Right cardiac atrium (tissue), 5 donors: ENCODE measurements at regions of chr6 and their contacts with region 1.

Region 1: DNA sequence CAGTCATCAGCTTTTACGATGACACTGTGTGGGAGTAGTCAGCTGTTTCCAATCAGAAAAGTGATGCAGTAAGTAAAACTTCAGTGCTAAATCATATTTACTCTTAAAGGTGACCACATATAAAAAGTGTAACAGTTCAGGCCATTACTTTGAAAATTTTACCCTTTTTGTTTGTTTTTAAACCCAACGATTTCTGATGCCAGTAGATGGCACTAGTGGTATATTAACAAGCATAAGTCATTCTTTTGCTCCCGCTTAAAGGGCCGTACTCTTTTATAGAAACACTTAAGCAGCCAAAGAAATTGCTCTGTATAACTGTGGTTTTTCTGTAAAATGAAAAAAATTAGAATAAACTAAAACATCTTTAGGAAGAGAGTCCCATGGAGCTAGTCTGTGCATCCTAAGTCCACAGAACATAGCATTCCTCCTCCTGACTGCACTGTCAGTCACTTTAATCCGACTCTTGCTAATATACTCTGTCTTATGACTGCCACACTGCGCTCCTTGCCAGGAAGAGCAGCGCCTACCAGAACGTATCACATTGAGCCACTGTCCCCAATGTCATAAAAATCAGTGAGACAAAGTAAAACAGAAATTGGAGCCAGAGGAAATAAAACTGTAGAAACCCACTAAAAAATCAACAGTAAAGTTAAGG is 25.0 kb downstream of the HEBP2 start:
- DNase-seq: peak in 1 of 3 donors; percentile 51
- ATAC-seq: peak; percentile 38 to 42
- H3K4me3 ChIP-seq: no peak overlapping the region
- H3K27ac ChIP-seq: no peak overlapping the region
- H3K4me1 ChIP-seq: no peaks in the 10 kb centered on the region
- H3K27me3 ChIP-seq: no peaks in the 10 kb centered on the region

Region 2: GRCh38 chr6:138509371-138509770 is 80.3 kb after region 1 on chr6:
- intact Hi-C with region 1: loop called (anchors 5 to 10 kb)
- DNase-seq: peak in 2 of 3 donors; percentile 46 to 64
- ATAC-seq: peak in 1 of 2 donors; percentile 68
- H3K4me3 ChIP-seq: no peak overlapping the region
- H3K27ac ChIP-seq: no peak overlapping the region
- H3K4me1 ChIP-seq: no peaks in the 10 kb centered on the region
- H3K27me3 ChIP-seq: no peaks in the 10 kb centered on the region

Region 3: DNA sequence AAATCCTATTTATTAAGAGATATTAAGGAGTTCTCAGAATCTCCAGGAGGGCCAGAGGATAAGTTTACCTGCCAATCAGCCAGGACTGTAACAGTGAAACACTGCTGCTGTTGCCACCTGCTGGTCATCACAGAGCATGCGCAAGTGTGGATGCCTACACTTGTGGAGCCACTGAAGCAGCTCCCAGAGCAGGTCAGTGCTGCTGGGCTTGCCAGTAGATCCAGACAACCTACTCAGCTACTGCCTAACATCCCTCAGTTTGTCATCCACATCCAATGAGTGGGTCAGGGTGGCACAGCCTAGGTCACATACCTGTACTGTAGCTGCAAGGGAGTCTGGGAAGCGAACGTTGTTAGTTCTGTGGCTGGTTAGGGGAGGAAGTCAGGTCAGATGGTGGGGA is 88.6 kb after region 1 on chr6:
- intact Hi-C with region 1: loop called in 2 of 4 experiments (anchors 5 to 10 kb)
- DNase-seq: peak in 2 of 3 donors; percentile 47 to 58
- ATAC-seq: peak; percentile 51 to 60
- H3K4me3 ChIP-seq: no peak overlapping the region
- H3K27ac ChIP-seq: no peak overlapping the region
- H3K4me1 ChIP-seq: peaks cover 4% of the 10 kb centered on the region
- H3K27me3 ChIP-seq: no peaks in the 10 kb centered on the region

Region 4: DNA sequence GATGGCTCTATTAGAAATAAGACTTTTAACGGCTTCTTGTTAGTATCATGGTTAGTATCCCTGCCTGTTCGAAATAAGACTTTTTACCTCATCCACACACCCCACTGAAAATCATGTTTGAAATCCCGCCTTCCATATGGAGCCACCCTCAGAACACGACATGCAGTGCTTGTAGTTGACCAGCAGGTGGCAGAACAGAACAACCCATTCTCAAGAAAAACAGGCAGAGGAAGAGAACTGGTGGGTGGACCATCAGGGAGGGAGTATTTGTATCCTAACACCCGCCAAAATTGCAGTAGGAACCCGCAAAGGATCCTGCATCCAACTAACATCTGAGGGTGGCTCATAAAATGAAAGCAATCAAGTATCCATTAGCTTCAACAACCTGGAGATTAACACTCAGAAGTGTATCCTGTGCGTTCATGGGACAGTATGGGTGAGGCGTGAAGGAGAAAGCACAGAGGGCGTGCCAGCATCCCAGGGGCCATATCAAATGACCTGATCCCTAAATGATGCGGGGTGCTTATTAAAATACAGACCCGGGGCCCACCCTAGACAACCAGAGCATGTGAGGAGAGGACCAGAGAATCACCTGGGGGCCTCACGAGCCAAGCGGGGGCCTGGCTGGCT is 159.8 kb after region 1 on chr6:
- intact Hi-C with region 1: loop called (anchors 2 to 5 kb)
- DNase-seq: peak in 2 of 3 donors; percentile 47 to 77
- ATAC-seq: peak; percentile 53 to 56
- H3K4me3 ChIP-seq: no peak overlapping the region
- H3K27ac ChIP-seq: no peak overlapping the region
- H3K4me1 ChIP-seq: no peaks in the 10 kb centered on the region
- H3K27me3 ChIP-seq: no peaks in the 10 kb centered on the region

Region 5: DNA sequence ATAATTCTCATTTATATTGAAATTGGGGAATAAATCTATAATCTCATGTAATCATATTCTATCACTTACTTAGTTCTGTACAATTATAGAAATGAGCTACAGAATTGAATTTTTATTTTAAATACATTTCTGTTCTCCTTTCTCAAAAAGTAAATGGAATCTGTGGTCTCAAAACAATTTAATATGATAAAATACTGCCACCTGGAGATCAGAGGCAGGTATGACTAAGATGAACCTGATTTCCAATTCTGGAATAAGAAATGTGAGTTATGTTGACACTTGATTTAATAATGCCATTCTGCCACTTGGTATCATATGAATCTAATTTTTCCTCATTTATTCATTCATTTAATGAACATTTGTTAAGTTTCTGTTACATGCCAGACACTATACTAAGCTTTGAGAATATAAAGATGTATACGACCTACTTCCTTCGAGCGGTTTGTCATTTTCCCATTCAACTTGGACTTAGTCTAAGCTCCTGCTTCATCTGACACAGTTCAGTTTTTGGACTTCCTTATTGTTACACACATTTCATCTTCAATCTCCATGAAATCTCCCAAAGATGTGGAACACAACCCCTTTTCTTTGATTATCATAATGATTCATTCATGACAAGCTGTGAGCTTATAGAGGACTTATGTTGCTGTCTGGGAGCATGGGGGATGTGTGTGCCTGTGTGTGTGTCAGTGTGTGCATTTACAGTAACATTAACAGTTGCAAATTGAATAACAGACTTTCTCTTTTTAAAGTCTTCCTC is 337.0 kb after region 1 on chr6:
- intact Hi-C with region 1: loop called in 1 of 4 experiments (anchors 5 kb)
- DNase-seq: no peak
- ATAC-seq: no peak
- H3K4me3 ChIP-seq: no peak overlapping the region
- H3K27ac ChIP-seq: no peak overlapping the region
- H3K4me1 ChIP-seq: no peaks in the 10 kb centered on the region
- H3K27me3 ChIP-seq: no peaks in the 10 kb centered on the region